H1 (cell line): ENCODE measurements at regions of chr12 and their contacts with region 1.

Region 1: GRCh38 chr12:54368709-54369583 is 4.7 kb upstream of the GPR84 start:
- DNase-seq: peak in 1 of 2 experiments; percentile 90
- H3K4me3 ChIP-seq: peak overlapping the region; percentile 4 to 64 (median 17); a peak in 5 of 8 replicates
- H3K27ac ChIP-seq: no peak overlapping the region
- H3K4me1 ChIP-seq: peaks cover 0 to 11% (median 6%) of the 10 kb centered on the region in 4 experiments; a peak in 5 of 7 replicates
- H3K27me3 ChIP-seq: peaks cover 0 to 16% (median 12%) of the 10 kb centered on the region in 4 experiments; a peak in 6 of 7 replicates
- CTCF ChIP-seq: peak; percentile 90 to 94 (median 94)
- EP300 ChIP-seq: no peak
- POLR2A ChIP-seq: no peak
- RAD21 ChIP-seq: peak; percentile 84 to 88

Region 2: DNA sequence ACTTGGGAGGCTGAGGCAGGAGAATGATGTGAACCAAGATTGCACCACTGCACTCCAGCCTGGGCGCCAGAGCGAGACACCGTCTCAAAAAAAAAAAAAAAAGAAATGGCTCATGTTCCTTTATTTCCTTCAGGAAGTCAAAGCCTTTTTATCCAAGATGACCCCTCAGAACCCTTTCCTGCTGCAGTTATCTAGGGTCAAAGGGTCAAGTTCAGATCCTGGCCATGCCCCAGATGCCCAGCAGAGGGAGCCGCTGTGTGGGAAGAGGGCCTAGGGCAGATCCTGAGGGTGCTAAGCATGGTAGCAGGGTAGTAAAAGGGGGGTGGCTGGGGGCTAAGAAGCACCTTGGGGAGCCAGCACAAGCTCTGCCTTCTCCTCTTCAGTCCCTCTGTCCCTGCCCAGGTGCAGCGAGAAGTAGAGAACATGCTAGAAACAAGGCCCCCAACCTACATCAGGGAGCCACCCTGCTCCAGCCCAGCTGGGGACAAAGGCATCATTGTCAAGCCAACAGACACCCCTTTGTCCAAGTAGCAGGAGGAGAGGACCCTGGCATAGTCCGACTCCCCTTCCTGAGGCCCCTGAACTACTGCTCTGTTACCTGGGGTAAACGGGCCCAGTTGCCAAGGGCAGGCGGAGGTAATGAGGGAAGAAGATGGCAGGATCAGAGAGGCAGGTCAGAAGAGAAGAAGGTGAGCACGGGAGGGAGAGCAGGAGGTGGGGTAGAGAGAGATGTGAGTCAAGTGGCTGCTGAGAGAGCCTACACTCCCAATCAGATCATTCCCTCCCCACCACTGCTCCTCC is 74.6 kb before region 1 on chr12:
- CTCF ChIA-PET with region 1: interaction called, 251 read pairs
- POLR2A ChIA-PET with region 1: interaction called, 5 read pairs
- DNase-seq: peak in 1 of 2 experiments; percentile 94
- H3K4me3 ChIP-seq: no peak overlapping the region
- H3K27ac ChIP-seq: no peak overlapping the region
- H3K4me1 ChIP-seq: peaks cover 0 to 2% (median 0%) of the 10 kb centered on the region in 4 experiments; a peak in 1 of 7 replicates
- H3K27me3 ChIP-seq: peaks cover 0 to 4% (median 0%) of the 10 kb centered on the region in 4 experiments; a peak in 1 of 7 replicates
- CTCF ChIP-seq: peak; percentile 91 to 95 (median 93)
- EP300 ChIP-seq: no peak
- POLR2A ChIP-seq: no peak
- RAD21 ChIP-seq: peak; percentile 81 to 92

Region 3: DNA sequence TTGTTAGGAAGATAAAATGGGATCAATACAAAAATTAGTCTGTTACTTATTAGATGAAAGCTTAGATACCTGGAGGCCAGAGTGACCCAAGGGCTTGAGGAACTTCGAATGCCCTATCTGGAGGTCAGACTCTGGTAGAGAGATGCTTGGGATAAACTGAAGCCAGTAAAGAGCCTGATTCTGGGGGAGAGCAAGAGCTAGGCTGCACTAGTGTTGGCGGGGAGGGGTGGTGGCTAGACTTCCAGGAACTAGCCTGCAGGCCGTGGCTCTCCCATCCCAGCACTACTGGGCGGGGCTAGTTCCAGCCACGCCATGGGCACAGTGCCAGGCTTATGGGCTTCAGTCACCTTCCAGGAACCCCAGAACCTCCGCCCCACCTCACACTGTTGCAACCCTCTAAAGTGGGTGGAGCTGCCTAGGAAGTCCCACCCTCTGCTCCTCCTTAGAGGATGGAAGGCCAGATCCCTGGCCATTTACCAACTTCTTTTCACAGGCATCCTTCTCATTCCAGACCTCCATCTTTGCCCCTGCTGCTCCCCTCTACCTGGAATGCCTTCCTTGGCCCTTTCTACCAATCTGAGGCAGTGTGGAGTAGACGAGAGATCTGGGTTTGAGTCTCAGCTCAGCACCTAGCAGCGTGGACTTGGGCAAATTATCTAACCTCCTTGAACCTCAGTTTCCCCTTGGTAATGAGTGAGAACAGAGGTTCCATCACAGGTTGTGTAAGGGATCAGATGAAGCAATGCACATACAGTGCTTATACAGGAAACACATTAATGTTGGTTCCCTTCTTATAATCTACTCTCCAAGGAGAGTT is 61.8 kb before region 1 on chr12:
- CTCF ChIA-PET with region 1: interaction called, 251 read pairs
- POLR2A ChIA-PET with region 1: interaction called, 4 read pairs
- DNase-seq: no peak
- H3K4me3 ChIP-seq: no peak overlapping the region
- H3K27ac ChIP-seq: no peak overlapping the region
- H3K4me1 ChIP-seq: peaks cover 4 to 18% (median 12%) of the 10 kb centered on the region in 4 experiments
- H3K27me3 ChIP-seq: no peaks in the 10 kb centered on the region
- CTCF ChIP-seq: no peak
- EP300 ChIP-seq: no peak
- POLR2A ChIP-seq: no peak
- RAD21 ChIP-seq: no peak

Region 4: GRCh38 chr12:54352022-54352531 is 16.9 kb before region 1 on chr12:
- CTCF ChIA-PET with region 1: interaction called, 57 read pairs
- POLR2A ChIA-PET with region 1: interaction called, 3 read pairs
- DNase-seq: peak; percentile 50 to 70
- H3K4me3 ChIP-seq: peak overlapping the region; percentile 44 to 64 (median 62)
- H3K27ac ChIP-seq: peak overlapping the region; percentile 61
- H3K4me1 ChIP-seq: peaks cover 27 to 69% (median 33%) of the 10 kb centered on the region in 4 experiments
- H3K27me3 ChIP-seq: peaks cover 0 to 9% (median 4%) of the 10 kb centered on the region in 4 experiments; a peak in 3 of 7 replicates
- CTCF ChIP-seq: no peak
- EP300 ChIP-seq: no peak
- POLR2A ChIP-seq: peak in 1 of 2 experiments; percentile 41; a peak in 1 of 3 replicates
- RAD21 ChIP-seq: no peak

Region 5: GRCh38 chr12:54398995-54399793 is 30.2 kb after region 1 on chr12:
- CTCF ChIA-PET with region 1: interaction called, 19 read pairs
- POLR2A ChIA-PET with region 1: interaction called, 3 read pairs
- DNase-seq: peak in 1 of 2 experiments; percentile 98
- H3K4me3 ChIP-seq: no peak overlapping the region
- H3K27ac ChIP-seq: no peak overlapping the region
- H3K4me1 ChIP-seq: no peaks in the 10 kb centered on the region
- H3K27me3 ChIP-seq: no peaks in the 10 kb centered on the region
- CTCF ChIP-seq: peak; percentile 97 to 100 (median 99)
- EP300 ChIP-seq: no peak
- POLR2A ChIP-seq: no peak
- RAD21 ChIP-seq: peak; percentile 96 to 97

Region 6: GRCh38 chr12:54541751-54542290 is 172.9 kb after region 1 on chr12:
- CTCF ChIA-PET with region 1: no interaction called
- POLR2A ChIA-PET with region 1: no interaction called
- DNase-seq: no peak
- H3K4me3 ChIP-seq: no peak overlapping the region
- H3K27ac ChIP-seq: no peak overlapping the region
- H3K4me1 ChIP-seq: peaks cover 0 to 9% (median 3%) of the 10 kb centered on the region in 4 experiments; a peak in 4 of 7 replicates
- H3K27me3 ChIP-seq: peaks cover 0 to 7% (median 3%) of the 10 kb centered on the region in 4 experiments; a peak in 4 of 7 replicates
- CTCF ChIP-seq: no peak
- EP300 ChIP-seq: no peak
- POLR2A ChIP-seq: no peak
- RAD21 ChIP-seq: no peak

Region 7: DNA sequence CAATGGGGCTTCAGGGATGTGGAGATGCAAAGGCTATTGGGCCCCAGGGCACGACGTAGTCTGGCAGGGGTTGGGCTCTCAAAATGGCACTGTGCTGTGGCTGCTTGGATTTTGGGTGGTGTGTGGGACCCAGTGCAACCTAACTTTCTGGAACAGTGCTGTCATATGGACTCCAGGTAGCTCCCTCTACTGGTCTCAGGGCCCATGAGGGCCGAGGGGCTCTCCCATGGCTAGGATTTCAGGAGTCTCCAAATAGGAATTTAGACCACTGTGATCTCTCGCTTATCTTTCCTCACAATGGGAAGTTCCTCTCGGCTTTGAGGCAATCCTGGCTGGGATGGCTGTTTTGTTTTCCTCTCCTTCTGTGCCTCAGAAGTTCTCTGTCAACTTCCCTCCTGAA is 417.1 kb after region 1 on chr12:
- CTCF ChIA-PET with region 1: no interaction called
- POLR2A ChIA-PET with region 1: no interaction called
- DNase-seq: no peak
- H3K4me3 ChIP-seq: no peak overlapping the region
- H3K27ac ChIP-seq: no peak overlapping the region
- H3K4me1 ChIP-seq: no peaks in the 10 kb centered on the region
- H3K27me3 ChIP-seq: no peaks in the 10 kb centered on the region
- CTCF ChIP-seq: peak in 2 of 3 experiments; percentile 22 to 46; a peak in 2 of 4 replicates
- EP300 ChIP-seq: no peak
- POLR2A ChIP-seq: no peak
- RAD21 ChIP-seq: peak; percentile 9 to 32; a peak in 2 of 4 replicates